PC-9 (cell line): ENCODE measurements at regions of chr15 and their contacts with region 1.

Region 1: GRCh38 chr15:56856934-56857333 is 61.5 kb upstream of the TCF12 start:
- DNase-seq: no peak
- H3K4me3 ChIP-seq: no peak overlapping the region
- H3K27ac ChIP-seq: no peak overlapping the region
- H3K4me1 ChIP-seq: no peaks in the 10 kb centered on the region
- H3K27me3 ChIP-seq: no peaks in the 10 kb centered on the region
- CTCF ChIP-seq: no peak

Region 2: GRCh38 chr15:56835718-56836171 is 21.2 kb before region 1 on chr15:
- CTCF ChIA-PET with region 1: no interaction called
- POLR2A ChIA-PET with region 1: no interaction called
- intact Hi-C with region 1: no loop called
- DNase-seq: no peak
- H3K4me3 ChIP-seq: no peak overlapping the region
- H3K27ac ChIP-seq: no peak overlapping the region
- H3K4me1 ChIP-seq: no peaks in the 10 kb centered on the region
- H3K27me3 ChIP-seq: no peaks in the 10 kb centered on the region
- CTCF ChIP-seq: no peak

Region 3: DNA sequence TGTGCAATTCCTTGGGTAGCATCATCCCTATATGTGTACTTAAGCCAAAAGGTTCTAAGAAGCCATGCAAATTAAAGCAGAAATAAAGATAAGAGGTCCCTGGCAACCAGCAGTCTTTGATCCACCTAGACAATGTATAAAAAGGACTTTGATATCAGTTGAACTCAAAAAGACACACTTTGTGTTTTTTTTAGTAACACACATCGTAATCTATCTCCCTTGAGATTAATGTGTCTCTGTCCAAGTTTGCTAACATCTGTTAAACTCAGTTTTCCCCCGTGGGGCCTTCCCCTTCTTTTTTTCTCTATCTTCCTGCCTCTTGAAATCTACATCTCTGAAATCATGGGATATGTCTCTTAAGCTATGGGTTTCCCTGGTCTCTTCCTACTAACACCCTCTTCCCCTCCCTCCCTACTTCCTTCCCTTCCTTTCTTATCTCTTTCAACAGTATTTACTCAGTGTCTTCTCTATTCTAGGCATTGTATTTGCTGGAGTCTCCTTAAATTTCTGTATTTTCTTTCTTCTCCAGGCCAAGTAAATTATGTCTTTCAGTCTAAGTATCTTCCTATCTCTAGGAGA is 1180.9 kb after region 1 on chr15:
- CTCF ChIA-PET with region 1: no interaction called
- POLR2A ChIA-PET with region 1: interaction called, 15 read pairs
- intact Hi-C with region 1: no loop called
- DNase-seq: no peak
- H3K4me3 ChIP-seq: no peak overlapping the region
- H3K27ac ChIP-seq: no peak overlapping the region
- H3K4me1 ChIP-seq: no peaks in the 10 kb centered on the region
- H3K27me3 ChIP-seq: no peaks in the 10 kb centered on the region
- CTCF ChIP-seq: no peak